Activated CD4-positive, alpha-beta memory T cell treated with anti-CD3 and anti-CD28 coated beads for 36 hours (primary cell): ENCODE measurements at regions of chr19 and their contacts with region 1.

Region 1: DNA sequence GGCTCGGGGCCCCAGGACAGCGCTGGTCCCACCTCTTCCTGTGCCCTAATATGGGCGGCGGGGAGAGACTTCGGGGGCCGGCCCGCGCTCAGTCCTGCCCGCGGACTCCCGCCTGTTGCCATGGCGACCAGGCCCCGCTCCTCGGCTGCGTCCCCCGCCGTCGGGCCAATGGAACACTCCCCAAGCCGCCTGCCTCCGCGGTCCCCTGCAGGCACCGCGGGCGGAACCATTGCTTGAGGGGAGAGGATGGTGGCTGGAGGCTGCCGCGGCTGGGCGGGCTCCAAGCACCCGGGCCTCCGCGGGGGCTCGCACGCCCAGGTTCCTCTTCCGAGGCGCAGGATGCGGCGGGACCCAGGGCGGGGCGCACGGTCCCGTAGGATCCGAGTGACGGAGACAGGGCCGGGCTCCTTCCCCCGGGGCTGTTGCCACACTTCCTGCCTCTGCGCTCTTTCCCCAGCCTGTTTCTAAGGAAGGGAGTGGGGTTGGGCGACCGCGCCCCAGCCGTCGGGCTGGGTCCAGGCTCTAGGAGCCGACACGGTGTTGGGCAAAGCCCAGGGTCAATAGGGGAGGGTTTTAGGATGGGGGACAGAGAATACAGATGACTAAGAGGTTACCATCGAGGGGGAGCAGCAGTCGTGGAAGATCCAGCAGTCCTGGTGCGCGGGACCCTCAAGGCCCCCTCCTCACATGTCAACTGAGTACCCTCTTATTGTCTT is 1.2 kb upstream of the JUNB start:
- DNase-seq: peak; percentile 98
- H3K4me3 Mint-ChIP-seq: peak overlapping the region; percentile 94
- H3K27ac Mint-ChIP-seq: peak overlapping the region; percentile 99
- H3K4me1 Mint-ChIP-seq: peaks cover 20% of the 10 kb centered on the region
- H3K27me3 Mint-ChIP-seq: no peaks in the 10 kb centered on the region

Region 2: GRCh38 chr19:12610540-12611360 is 179.3 kb before region 1 on chr19 and contains the starts of genes ZNF490 and ZNF791:
- CTCF ChIA-PET with region 1: no interaction called
- POLR2A ChIA-PET with region 1: no interaction called
- intact Hi-C with region 1: loop called (anchors 5 kb)
- DNase-seq: peak; percentile 98
- H3K4me3 Mint-ChIP-seq: peak within 1 kb of the TSS; percentile 100
- H3K27ac Mint-ChIP-seq: peak within 1 kb of the TSS; percentile 99
- H3K4me1 Mint-ChIP-seq: peaks cover 26% of the 10 kb centered on the region
- H3K27me3 Mint-ChIP-seq: no peaks in the 10 kb centered on the region
- total RNA-seq, gene ZNF490: 6.9 to 7.0 TPM
- total RNA-seq, gene ZNF791: 18.2 to 19.1 TPM

Region 3: GRCh38 chr19:12736995-12737834 is 52.8 kb before region 1 on chr19 and contains the start of gene GET3:
- CTCF ChIA-PET with region 1: interaction called, 9 read pairs
- POLR2A ChIA-PET with region 1: interaction called, 10 read pairs
- intact Hi-C with region 1: loop called (anchors 2 kb)
- DNase-seq: peak; percentile 88
- H3K4me3 Mint-ChIP-seq: peak within 1 kb of the TSS; percentile 100
- H3K27ac Mint-ChIP-seq: peak within 1 kb of the TSS; percentile 93
- H3K4me1 Mint-ChIP-seq: peaks cover 33% of the 10 kb centered on the region
- H3K27me3 Mint-ChIP-seq: no peaks in the 10 kb centered on the region
- total RNA-seq, gene GET3: 54.2 TPM

Region 4: DNA sequence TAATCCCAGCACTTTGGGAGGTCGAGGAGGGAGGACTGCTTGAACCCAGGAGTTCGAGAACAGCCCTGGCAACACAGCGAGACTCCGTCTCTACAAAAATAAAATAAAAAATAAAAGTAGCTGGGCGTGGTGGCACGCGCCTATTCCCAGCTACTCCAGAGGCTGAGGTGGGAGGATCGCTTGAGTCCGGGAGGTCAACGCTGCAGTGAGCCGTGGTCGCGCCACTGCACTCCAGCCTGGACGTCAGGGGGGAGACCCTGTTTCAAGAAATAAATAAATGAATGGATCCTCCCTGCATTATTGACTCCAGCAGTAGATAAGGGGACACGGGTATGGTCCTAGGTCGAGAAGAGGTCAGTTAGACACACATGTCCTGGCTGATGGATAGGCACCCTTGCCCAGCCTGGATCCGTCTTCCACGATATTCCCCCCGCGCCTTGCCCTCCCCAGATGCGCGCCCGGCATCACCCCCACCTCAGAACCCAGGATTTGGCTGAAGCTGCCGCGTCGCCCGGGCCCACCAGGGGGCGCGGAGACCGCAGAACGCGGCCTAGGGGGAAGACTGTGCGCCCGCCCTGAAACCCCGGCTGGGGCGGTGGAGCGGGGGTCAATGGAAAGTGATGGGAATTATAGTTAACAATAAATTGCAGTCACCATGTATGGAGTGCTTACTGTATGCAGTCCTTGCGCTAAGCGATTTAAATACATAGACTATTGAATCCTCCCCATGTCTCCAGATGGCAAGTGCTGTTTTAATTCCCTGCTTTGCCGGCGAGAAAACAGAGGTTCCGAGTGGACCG is 12.6 kb before region 1 on chr19:
- CTCF ChIA-PET with region 1: interaction called, 372 read pairs
- POLR2A ChIA-PET with region 1: interaction called, 89 read pairs
- intact Hi-C with region 1: loop called (anchors 1 kb)
- DNase-seq: peak; percentile 87
- H3K4me3 Mint-ChIP-seq: peak overlapping the region; percentile 76
- H3K27ac Mint-ChIP-seq: peak overlapping the region; percentile 87
- H3K4me1 Mint-ChIP-seq: peaks cover 40% of the 10 kb centered on the region
- H3K27me3 Mint-ChIP-seq: no peaks in the 10 kb centered on the region

Region 5: GRCh38 chr19:12890787-12891552 is 100.9 kb after region 1 on chr19 and contains the start of gene GCDH:
- CTCF ChIA-PET with region 1: no interaction called
- POLR2A ChIA-PET with region 1: no interaction called
- intact Hi-C with region 1: no loop called
- DNase-seq: peak; percentile 98
- H3K4me3 Mint-ChIP-seq: peak within 1 kb of the TSS; percentile 99
- H3K27ac Mint-ChIP-seq: peak within 1 kb of the TSS; percentile 81
- H3K4me1 Mint-ChIP-seq: peaks cover 29% of the 10 kb centered on the region
- H3K27me3 Mint-ChIP-seq: no peaks in the 10 kb centered on the region
- total RNA-seq, gene GCDH: 33.6 to 34.4 TPM

Region 6: DNA sequence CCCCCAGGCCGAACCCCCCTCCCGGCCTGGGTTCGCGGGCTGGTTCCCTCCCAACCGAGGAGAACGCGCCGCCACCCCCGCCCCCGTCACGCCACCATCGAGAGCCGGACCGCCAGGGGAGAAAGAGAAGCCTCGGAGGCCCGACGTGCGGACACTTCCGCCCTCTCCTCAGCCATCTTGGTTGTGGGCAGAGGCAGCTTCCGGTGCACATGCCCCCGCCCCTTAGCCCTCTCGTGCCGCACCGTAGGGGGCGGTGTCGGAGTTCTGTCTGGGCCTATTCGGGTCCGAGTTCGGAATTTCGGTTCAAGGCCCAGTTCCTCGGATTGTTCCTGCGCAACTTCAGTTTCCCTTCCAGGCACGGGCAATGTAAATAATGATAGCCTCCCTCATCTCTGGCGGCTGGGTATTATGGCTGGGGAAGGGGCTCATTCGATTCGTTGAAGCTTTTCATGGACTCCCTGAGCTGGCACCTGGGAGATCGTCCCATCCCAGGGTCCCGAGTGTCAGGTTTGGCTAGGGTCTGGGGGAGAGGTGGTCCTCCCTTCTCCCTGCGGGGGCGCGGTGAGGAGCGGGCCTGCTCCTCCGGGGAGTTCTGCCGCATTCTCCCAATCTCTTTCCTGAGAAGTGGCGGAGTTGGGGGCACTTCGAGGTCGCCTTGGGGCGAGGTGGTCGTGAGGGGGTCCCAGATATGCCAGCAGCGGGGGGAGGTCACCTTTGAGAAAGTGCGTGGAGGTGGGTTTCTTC is 360.3 kb after region 1 on chr19 and contains the starts of genes IER2 and STX10:
- CTCF ChIA-PET with region 1: no interaction called
- POLR2A ChIA-PET with region 1: interaction called, 6 read pairs
- intact Hi-C with region 1: loop called (anchors 5 kb)
- DNase-seq: peak; percentile 96
- H3K4me3 Mint-ChIP-seq: peak within 1 kb of the TSS; percentile 99
- H3K27ac Mint-ChIP-seq: peak within 1 kb of the TSS; percentile 97
- H3K4me1 Mint-ChIP-seq: peaks cover 23% of the 10 kb centered on the region
- H3K27me3 Mint-ChIP-seq: peaks cover 3% of the 10 kb centered on the region
- total RNA-seq, gene IER2: 129 to 137 TPM
- total RNA-seq, gene STX10: 65.5 to 66.3 TPM